CD4-positive, alpha-beta memory T cell (primary cell): ENCODE measurements at regions of chr5 and their contacts with region 1.

Region 1: DNA sequence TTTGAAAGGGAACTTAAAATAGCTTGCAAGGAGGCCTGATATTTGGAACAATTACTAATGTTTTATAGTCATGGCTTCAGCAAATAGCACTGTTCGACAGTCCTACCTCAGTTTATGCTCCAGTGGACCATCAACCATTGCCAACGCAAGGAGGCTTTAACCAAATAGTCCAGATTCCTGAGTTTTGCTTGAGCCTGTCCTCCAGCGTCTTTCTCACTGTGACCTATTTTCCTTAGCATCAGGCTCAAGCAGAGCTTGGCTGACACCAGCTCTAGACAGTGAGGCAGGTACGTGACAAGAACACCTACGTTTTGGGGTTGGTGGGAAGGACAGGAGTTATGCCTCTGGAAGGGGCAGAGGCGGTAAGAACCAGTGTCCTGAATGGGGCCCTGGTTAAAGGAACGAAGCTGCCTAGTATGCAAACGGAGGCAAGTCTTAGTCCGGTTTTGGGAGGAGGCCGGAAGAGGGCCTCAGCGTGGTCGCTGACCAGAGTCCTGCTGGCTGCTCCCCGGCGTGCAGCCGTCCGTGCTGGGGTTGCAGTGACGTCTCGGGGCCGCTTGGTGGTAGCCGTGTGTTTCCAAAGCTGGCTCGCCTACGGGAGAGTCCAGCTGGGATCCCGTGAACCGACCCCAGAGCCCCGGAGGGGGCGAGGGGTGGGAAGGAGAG is 998 bp upstream of the FGF18 start:
- DNase-seq: peak in 4 of 5 donors; percentile 24 to 37 (median 33)
- H3K4me3 ChIP-seq: peak overlapping the region; percentile 11 to 58
- H3K4me3 Mint-ChIP-seq: peak overlapping the region; percentile 63 to 84 (median 78)
- H3K27ac ChIP-seq: no peak overlapping the region
- H3K27ac Mint-ChIP-seq: peak overlapping the region in 2 of 7 donors; percentile 46 to 54
- H3K4me1 ChIP-seq: peaks cover 20% of the 10 kb centered on the region
- H3K4me1 Mint-ChIP-seq: peaks cover 5 to 20% (median 13%) of the 10 kb centered on the region in 4 donors
- H3K27me3 ChIP-seq: peaks cover 10% of the 10 kb centered on the region
- H3K27me3 Mint-ChIP-seq: peaks cover 7 to 9% of the 10 kb centered on the region in 2 donors

Region 2: GRCh38 chr5:171330021-171330420 is 88.4 kb before region 1 on chr5:
- CTCF ChIA-PET with region 1: no interaction called
- POLR2A ChIA-PET with region 1: no interaction called
- intact Hi-C with region 1: no loop called
- DNase-seq: no peak
- H3K4me3 ChIP-seq: no peak overlapping the region
- H3K4me3 Mint-ChIP-seq: no peak overlapping the region
- H3K27ac ChIP-seq: no peak overlapping the region
- H3K27ac Mint-ChIP-seq: no peak overlapping the region
- H3K4me1 ChIP-seq: no peaks in the 10 kb centered on the region
- H3K4me1 Mint-ChIP-seq: no peaks in the 10 kb centered on the region
- H3K27me3 ChIP-seq: no peaks in the 10 kb centered on the region
- H3K27me3 Mint-ChIP-seq: peaks cover 11 to 23% of the 10 kb centered on the region in 2 donors

Region 3: GRCh38 chr5:171405601-171406005 is 12.8 kb before region 1 on chr5:
- CTCF ChIA-PET with region 1: interaction called, 11 read pairs
- POLR2A ChIA-PET with region 1: no interaction called
- intact Hi-C with region 1: no loop called
- DNase-seq: no peak
- H3K4me3 ChIP-seq: no peak overlapping the region
- H3K4me3 Mint-ChIP-seq: no peak overlapping the region
- H3K27ac ChIP-seq: no peak overlapping the region
- H3K27ac Mint-ChIP-seq: peak overlapping the region in 3 of 7 donors; percentile 5 to 57 (median 17)
- H3K4me1 ChIP-seq: peaks cover 24% of the 10 kb centered on the region
- H3K4me1 Mint-ChIP-seq: peaks cover 21 to 50% (median 37%) of the 10 kb centered on the region in 4 donors
- H3K27me3 ChIP-seq: no peaks in the 10 kb centered on the region
- H3K27me3 Mint-ChIP-seq: no peaks in the 10 kb centered on the region

Region 4: DNA sequence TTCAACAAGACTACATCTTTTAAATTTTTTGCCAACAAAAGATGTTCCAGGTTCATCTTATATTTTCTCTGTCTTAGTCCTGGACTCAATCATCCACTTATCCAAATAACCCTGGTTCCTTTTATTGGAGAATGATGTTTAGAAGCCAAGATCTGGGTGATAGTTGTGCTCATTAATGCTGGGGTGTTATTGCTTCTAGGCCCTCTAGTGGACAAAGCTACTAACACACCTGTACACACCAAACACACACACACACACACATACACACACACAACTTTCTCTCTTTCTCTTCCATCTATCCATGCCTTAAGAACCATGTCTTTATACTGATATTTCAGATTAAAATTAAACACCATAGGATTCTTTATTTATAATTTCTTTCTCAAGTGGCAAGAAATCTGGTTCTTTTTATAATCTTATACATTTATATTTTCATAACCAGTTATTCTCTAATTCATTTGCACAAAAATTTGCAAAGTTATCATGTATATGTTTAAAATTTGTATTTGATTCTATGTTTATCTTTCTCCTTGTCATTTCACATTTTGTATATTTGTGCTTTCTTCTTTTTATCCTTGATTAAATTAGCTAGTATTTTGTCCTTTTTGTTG is 188.1 kb after region 1 on chr5:
- CTCF ChIA-PET with region 1: no interaction called
- POLR2A ChIA-PET with region 1: no interaction called
- intact Hi-C with region 1: loop called (anchors 2 kb)
- DNase-seq: peak in 3 of 5 donors; percentile 2 to 6 (median 4)
- H3K4me3 ChIP-seq: no peak overlapping the region
- H3K4me3 Mint-ChIP-seq: no peak overlapping the region
- H3K27ac ChIP-seq: no peak overlapping the region
- H3K27ac Mint-ChIP-seq: no peak overlapping the region
- H3K4me1 ChIP-seq: no peaks in the 10 kb centered on the region
- H3K4me1 Mint-ChIP-seq: no peaks in the 10 kb centered on the region
- H3K27me3 ChIP-seq: no peaks in the 10 kb centered on the region
- H3K27me3 Mint-ChIP-seq: peaks cover 9 to 24% of the 10 kb centered on the region in 2 donors